Heart right ventricle (tissue), 16 donors: ENCODE measurements at regions of chr3 and their contacts with region 1.

Region 1: DNA sequence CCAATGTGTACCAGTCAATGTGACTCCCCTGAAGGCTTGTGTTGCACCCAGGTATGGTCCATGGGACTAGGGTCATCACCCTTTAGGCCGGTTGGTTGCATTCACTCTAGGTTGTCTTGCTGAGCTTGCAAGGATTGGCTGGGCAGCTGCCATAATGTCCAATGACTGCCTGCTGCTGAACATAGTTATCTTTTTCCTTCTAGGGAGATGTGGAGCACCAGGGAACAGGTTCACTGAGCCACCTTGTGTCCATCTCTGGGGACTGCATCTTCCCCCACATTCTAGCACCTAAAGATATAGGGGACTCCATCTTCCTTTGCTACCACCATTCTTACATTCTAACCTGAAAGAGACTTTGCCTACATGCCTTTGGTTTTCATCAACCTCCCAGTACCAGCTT is 580.4 kb upstream of the TBL1XR1 start:
- DNase-seq: peak; percentile 22 to 46
- ATAC-seq: peak in 2 of 8 donors; percentile 25 to 51
- H3K4me3 ChIP-seq: no peak overlapping the region
- H3K27ac ChIP-seq: no peak overlapping the region
- H3K4me1 ChIP-seq: peaks cover 10 to 62% (median 36%) of the 10 kb centered on the region in 9 donors
- H3K27me3 ChIP-seq: no peaks in the 10 kb centered on the region
- CTCF ChIP-seq: peak; percentile 22 to 71 (median 57)

Region 2: GRCh38 chr3:177041021-177041729 is 736.5 kb before region 1 on chr3:
- intact Hi-C with region 1: loop called in 1 of 10 experiments (anchors 10 kb)
- DNase-seq: peak in 1 of 2 donors; percentile 30
- ATAC-seq: peak; percentile 78 to 94 (median 88)
- H3K4me3 ChIP-seq: no peak overlapping the region
- H3K27ac ChIP-seq: peak overlapping the region in 8 of 10 donors; percentile 26 to 72 (median 52)
- H3K4me1 ChIP-seq: peaks cover 5 to 46% (median 29%) of the 10 kb centered on the region in 9 donors
- H3K27me3 ChIP-seq: no peaks in the 10 kb centered on the region
- CTCF ChIP-seq: no peak

Region 3: DNA sequence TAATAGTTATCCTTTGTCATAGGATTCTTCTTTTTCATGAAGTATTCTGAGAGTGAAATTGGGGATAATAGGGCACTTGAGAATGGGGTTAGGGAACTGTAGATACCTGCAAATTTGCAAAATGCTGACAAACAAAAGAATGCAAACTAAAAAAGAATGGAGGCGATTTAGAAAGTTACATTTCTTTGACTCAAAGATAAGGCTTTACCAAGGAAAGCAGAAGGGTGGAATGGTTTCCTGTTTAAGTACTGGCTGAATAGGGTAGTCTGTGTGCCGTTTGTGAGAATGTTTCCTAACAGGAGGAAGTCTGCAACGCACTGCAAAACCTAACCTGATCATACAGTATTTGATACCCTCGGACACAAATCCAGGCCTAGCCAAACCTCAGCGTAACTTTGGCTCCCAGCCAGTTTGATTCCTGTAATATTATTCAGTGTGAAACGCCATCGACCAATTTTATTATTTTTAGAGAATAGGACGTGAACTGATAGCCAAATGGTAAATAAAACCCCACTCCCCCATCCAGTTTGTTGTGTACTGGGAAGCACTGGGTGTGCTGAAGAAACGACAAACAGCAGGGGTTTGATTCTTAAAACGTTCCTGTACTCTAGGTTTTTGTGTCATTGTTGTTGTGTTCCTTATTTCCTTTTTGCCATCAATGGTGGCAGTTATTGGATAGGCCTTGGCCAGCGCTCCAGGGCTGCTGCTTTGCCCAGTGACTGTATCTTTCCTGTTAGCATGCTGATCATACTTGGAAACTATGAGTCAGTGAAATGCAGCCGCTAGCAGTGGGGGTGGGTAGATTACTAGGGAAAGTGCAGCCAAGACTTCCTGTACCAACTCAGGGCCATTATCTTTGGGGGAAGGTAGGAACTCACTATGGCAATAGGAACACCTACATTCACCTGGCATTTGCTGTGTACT is 432.4 kb before region 1 on chr3:
- intact Hi-C with region 1: loop called in 1 of 10 experiments (anchors 10 kb)
- DNase-seq: peak; percentile 79 to 90
- ATAC-seq: peak; percentile 93 to 99 (median 98)
- H3K4me3 ChIP-seq: peak overlapping the region in 1 of 10 donors; percentile 5
- H3K27ac ChIP-seq: peak overlapping the region; percentile 86 to 96 (median 90)
- H3K4me1 ChIP-seq: peaks cover 14 to 70% (median 55%) of the 10 kb centered on the region in 9 donors
- H3K27me3 ChIP-seq: no peaks in the 10 kb centered on the region
- CTCF ChIP-seq: no peak

Region 4: GRCh38 chr3:177597311-177598096 is 180.2 kb before region 1 on chr3:
- intact Hi-C with region 1: loop called in 1 of 10 experiments (anchors 10 kb)
- DNase-seq: peak in 1 of 2 donors; percentile 60
- ATAC-seq: peak; percentile 78 to 84 (median 79)
- H3K4me3 ChIP-seq: no peak overlapping the region
- H3K27ac ChIP-seq: peak overlapping the region in 9 of 10 donors; percentile 29 to 86 (median 59)
- H3K4me1 ChIP-seq: peaks cover 7 to 80% (median 37%) of the 10 kb centered on the region in 9 donors
- H3K27me3 ChIP-seq: no peaks in the 10 kb centered on the region
- CTCF ChIP-seq: no peak

Region 5: DNA sequence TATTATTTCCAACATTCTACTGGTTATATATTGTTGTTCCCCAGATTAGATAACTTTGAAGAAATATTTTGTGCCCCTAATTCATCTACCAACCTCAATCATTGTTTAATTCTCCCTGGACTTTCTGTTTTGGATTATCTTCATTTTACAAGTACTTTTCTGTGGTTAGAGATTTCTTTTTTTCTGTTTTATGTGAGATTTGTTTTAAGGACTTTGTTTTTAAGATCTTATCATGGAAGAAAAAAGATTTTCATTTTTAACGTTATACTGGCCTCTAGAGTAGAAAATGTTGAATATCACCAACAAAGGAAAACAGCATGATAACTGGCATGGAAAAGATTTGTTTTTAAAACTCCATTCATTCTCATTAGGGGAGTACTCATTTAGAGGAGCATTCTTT is 547.6 kb after region 1 on chr3:
- intact Hi-C with region 1: loop called in 2 of 10 experiments (anchors 10 kb)
- DNase-seq: no peak
- ATAC-seq: peak in 1 of 8 donors; percentile 25
- H3K4me3 ChIP-seq: no peak overlapping the region
- H3K27ac ChIP-seq: peak overlapping the region in 4 of 10 donors; percentile 17 to 44 (median 41)
- H3K4me1 ChIP-seq: peaks cover 6 to 41% (median 21%) of the 10 kb centered on the region in 9 donors
- H3K27me3 ChIP-seq: no peaks in the 10 kb centered on the region
- CTCF ChIP-seq: peak in 8 of 9 donors; percentile 8 to 68 (median 54)